ENCODE measurements at regions of chr6 and their contacts with region 1.

Region 1: GRCh38 chr6:34248727-34249551 is at the start of gene SMIM29:
- DNase-seq: peak; percentile 94
- ATAC-seq: peak; percentile 87
- H3K4me3 ChIP-seq: peak within 1 kb of the TSS; percentile 82 to 99 (median 98)
- H3K27ac ChIP-seq: peak within 1 kb of the TSS; percentile 60
- H3K4me1 ChIP-seq: peaks cover 39% of the 10 kb centered on the region
- H3K27me3 ChIP-seq: no peaks in the 10 kb centered on the region
- CTCF ChIP-seq: peak; percentile 92
- EP300 ChIP-seq: peak; percentile 11 to 50; a peak in 2 of 4 replicates
- POLR2A ChIP-seq: peak; percentile 46 to 77; a peak in 3 of 4 replicates
- RAD21 ChIP-seq: peak; percentile 98
- total RNA-seq, gene SMIM29: 11.2 and 15.3 TPM in 2 replicates

Region 2: DNA sequence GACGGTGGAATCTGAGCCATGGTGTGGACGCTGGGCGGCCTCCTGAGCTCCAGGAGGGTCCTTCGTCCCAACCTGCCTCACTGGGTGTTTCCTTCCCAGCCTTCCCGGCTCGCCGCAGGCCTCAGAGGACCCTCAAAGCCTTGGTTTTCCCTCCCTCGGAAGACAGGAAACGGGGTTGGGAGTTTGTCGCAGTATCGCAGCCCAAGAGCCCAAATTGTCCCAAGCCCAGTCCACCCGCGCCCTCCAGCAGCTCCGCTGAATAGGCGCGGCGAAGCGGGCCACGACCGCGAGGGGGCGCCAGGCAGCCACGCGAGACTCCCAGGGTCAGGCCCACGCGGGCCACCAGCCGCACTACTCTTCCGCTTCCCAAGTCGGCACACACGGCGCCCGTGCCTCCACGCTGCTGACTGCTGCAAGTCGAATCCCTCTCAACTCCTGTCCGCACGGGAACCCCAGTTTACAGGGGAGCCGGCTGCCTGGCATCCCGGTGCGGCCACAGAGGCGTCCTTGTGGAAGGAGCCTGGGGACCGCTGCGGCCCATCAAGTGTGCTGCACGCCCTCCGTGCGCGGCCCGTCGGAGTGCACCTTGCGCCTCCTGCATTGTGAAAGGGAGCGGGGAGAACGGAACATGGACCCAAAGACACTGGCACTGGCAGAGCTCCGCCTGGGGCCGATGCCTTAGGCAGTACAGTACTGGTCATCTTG is 52.7 kb before region 1 on chr6:
- CTCF ChIA-PET with region 1: no interaction called
- POLR2A ChIA-PET with region 1: interaction called, 6 read pairs
- in situ Hi-C with region 1: no loop called
- intact Hi-C with region 1: loop called (anchors 2 kb)
- DNase-seq: no peak
- ATAC-seq: peak; percentile 90
- H3K4me3 ChIP-seq: peak overlapping the region; percentile 55 to 74 (median 59)
- H3K27ac ChIP-seq: no peak overlapping the region
- H3K4me1 ChIP-seq: peaks cover 13% of the 10 kb centered on the region; the same call in 1 of the 2 replicates
- H3K27me3 ChIP-seq: peaks cover 8 to 26% of the 10 kb centered on the region in 2 experiments; a peak in 4 of 5 replicates
- CTCF ChIP-seq: peak; percentile 100
- EP300 ChIP-seq: no peak
- POLR2A ChIP-seq: no peak
- RAD21 ChIP-seq: peak; percentile 93

Region 3: GRCh38 chr6:34223956-34224940 is 24.7 kb before region 1 on chr6:
- CTCF ChIA-PET with region 1: no interaction called
- POLR2A ChIA-PET with region 1: interaction called, 17 read pairs
- in situ Hi-C with region 1: no loop called
- intact Hi-C with region 1: no loop called
- DNase-seq: peak; percentile 81
- ATAC-seq: peak; percentile 91
- H3K4me3 ChIP-seq: peak overlapping the region; percentile 60 to 76 (median 72)
- H3K27ac ChIP-seq: peak overlapping the region; percentile 38
- H3K4me1 ChIP-seq: peaks cover 38% of the 10 kb centered on the region
- H3K27me3 ChIP-seq: peaks cover 3 to 25% of the 10 kb centered on the region in 2 experiments; a peak in 2 of 5 replicates
- CTCF ChIP-seq: no peak
- EP300 ChIP-seq: peak in 1 of 2 experiments; percentile 24; a peak in 1 of 4 replicates
- POLR2A ChIP-seq: peak; percentile 88 to 93
- RAD21 ChIP-seq: peak; percentile 9; the same call in 1 of the 2 replicates

Region 4: GRCh38 chr6:34392497-34393190 is 143.7 kb after region 1 on chr6 and contains the start of gene NUDT3:
- CTCF ChIA-PET with region 1: interaction called, 12 read pairs
- POLR2A ChIA-PET with region 1: interaction called, 7 read pairs
- in situ Hi-C with region 1: no loop called
- intact Hi-C with region 1: loop called (anchors 2 kb)
- DNase-seq: peak; percentile 92
- ATAC-seq: peak; percentile 86
- H3K4me3 ChIP-seq: peak within 1 kb of the TSS; percentile 81 to 88 (median 86)
- H3K27ac ChIP-seq: peak within 1 kb of the TSS; percentile 93
- H3K4me1 ChIP-seq: peaks cover 35% of the 10 kb centered on the region
- H3K27me3 ChIP-seq: no peaks in the 10 kb centered on the region; a peak in 1 of 5 replicates
- CTCF ChIP-seq: peak; percentile 97
- EP300 ChIP-seq: no peak
- POLR2A ChIP-seq: peak; percentile 30 to 63; a peak in 3 of 4 replicates
- RAD21 ChIP-seq: peak; percentile 91
- total RNA-seq, gene NUDT3: 20.2 and 30.1 TPM in 2 replicates

Region 5: DNA sequence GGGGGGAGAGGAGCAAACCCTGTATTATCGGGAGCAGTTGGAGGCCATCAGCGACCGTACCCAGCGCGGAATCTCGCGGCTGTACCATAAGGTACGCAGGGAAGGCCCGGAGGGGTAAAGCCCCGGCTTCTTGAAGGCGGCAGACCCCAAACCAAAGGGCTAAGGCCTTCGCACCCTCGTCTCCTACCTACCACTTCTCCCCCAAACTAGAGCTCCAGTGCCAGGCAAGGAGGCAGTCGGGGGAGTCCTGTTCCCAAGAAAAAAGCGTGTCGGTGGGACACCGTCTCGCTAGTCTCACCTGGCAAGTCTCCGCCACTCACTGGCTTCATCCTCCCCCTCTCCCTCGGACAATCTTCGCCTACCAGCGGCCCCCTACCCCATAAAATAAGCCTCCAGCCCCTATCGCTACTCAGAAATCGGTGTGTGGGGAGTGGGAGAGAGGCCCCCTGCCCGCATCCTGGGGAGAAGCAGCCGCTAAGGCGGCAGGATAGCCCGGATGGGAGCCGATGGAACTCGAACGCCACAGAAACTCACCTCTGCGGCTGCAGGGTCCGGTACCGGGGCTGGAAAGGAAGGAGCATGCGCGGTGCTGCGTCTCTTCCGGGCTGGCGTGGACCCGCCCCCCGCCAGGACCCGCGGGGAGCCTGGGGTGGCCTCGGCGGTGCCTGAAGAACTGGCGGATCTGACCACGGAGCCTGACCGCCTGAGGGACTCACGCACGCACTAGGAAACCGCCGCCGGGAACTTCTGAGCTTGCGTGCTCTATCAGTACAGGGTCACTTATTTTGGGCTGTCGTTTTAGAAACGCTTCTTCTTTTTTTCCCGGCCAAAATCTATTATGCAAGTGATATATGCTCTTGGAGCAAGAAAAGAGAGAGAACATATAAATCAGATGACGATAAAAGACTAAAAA is 176.8 kb after region 1 on chr6 and contains the start of gene RPS10:
- CTCF ChIA-PET with region 1: no interaction called
- POLR2A ChIA-PET with region 1: interaction called, 15 read pairs
- in situ Hi-C with region 1: no loop called
- intact Hi-C with region 1: no loop called
- DNase-seq: peak; percentile 90
- ATAC-seq: peak; percentile 93
- H3K4me3 ChIP-seq: peak within 1 kb of the TSS; percentile 74 to 98 (median 89)
- H3K27ac ChIP-seq: peak within 1 kb of the TSS; percentile 73
- H3K4me1 ChIP-seq: peaks cover 58% of the 10 kb centered on the region
- H3K27me3 ChIP-seq: peaks cover 0 to 2% of the 10 kb centered on the region in 2 experiments; a peak in 1 of 5 replicates
- CTCF ChIP-seq: peak; percentile 52
- EP300 ChIP-seq: 0 out of 4 replicates have a peak, but pooled peaks of 1 of the 2 experiments have one; percentile 38
- POLR2A ChIP-seq: peak; percentile 97 to 98
- RAD21 ChIP-seq: peak; percentile 56
- total RNA-seq, gene RPS10: 2,909 and 3,503 TPM in 2 replicates

Region 6: GRCh38 chr6:34610819-34611477 is 362.0 kb after region 1 on chr6:
- CTCF ChIA-PET with region 1: interaction called, 5 read pairs
- POLR2A ChIA-PET with region 1: no interaction called
- in situ Hi-C with region 1: loop called (anchors 25 kb)
- intact Hi-C with region 1: loop called (anchors 5 kb)
- DNase-seq: peak; percentile 31
- ATAC-seq: no peak
- H3K4me3 ChIP-seq: no peak overlapping the region
- H3K27ac ChIP-seq: peak overlapping the region; percentile 37
- H3K4me1 ChIP-seq: peaks cover 13% of the 10 kb centered on the region
- H3K27me3 ChIP-seq: no peaks in the 10 kb centered on the region
- CTCF ChIP-seq: no peak
- EP300 ChIP-seq: no peak
- POLR2A ChIP-seq: no peak
- RAD21 ChIP-seq: no peak

Measured in HepG2 (cell line).